Activated T-helper 1 cell treated with anti-CD3 and anti-CD28 coated beads, Interleukin-12 subunit alpha, Interleukin-12 subunit beta, Interleukin-2, Interleukin-4 antibody, amounts not matched to agents 30 ng/mL and 10 ng/mL and 1 ng/mL, durations not matched to agents 14 hours and 24 hours and 36 hours (primary cell): ENCODE measurements at regions of chr9 and their contacts with region 1.

Region 1: GRCh38 chr9:109119439-109120203 is at the start of gene TMEM245:
- DNase-seq: peak; percentile 91
- H3K4me3 Mint-ChIP-seq: peak within 1 kb of the TSS; percentile 95
- H3K27ac Mint-ChIP-seq: peak within 1 kb of the TSS; percentile 87
- H3K4me1 Mint-ChIP-seq: peaks cover 33% of the 10 kb centered on the region
- H3K27me3 Mint-ChIP-seq: no peaks in the 10 kb centered on the region
- total RNA-seq, gene TMEM245: 26.9 and 29.4 TPM in 2 replicates

Region 2: GRCh38 chr9:108933718-108934322 is 185.8 kb before region 1 on chr9 and contains the start of gene ELP1:
- intact Hi-C with region 1: loop called (anchors 1 kb)
- DNase-seq: peak; percentile 90
- H3K4me3 Mint-ChIP-seq: peak within 1 kb of the TSS; percentile 95
- H3K27ac Mint-ChIP-seq: peak within 1 kb of the TSS; percentile 95
- H3K4me1 Mint-ChIP-seq: peaks cover 23% of the 10 kb centered on the region
- H3K27me3 Mint-ChIP-seq: no peaks in the 10 kb centered on the region
- total RNA-seq, gene ELP1: 31.6 and 35.2 TPM in 2 replicates

Region 3: GRCh38 chr9:109092051-109092580 is 27.5 kb before region 1 on chr9:
- intact Hi-C with region 1: loop called (anchors 1 kb)
- DNase-seq: no peak
- H3K4me3 Mint-ChIP-seq: no peak overlapping the region
- H3K27ac Mint-ChIP-seq: peak overlapping the region; percentile 82
- H3K4me1 Mint-ChIP-seq: peaks cover 47% of the 10 kb centered on the region
- H3K27me3 Mint-ChIP-seq: no peaks in the 10 kb centered on the region

Region 4: GRCh38 chr9:109182940-109183798 is 63.5 kb after region 1 on chr9:
- intact Hi-C with region 1: loop called (anchors 1 kb)
- DNase-seq: no peak
- H3K4me3 Mint-ChIP-seq: no peak overlapping the region
- H3K27ac Mint-ChIP-seq: no peak overlapping the region
- H3K4me1 Mint-ChIP-seq: peaks cover 7% of the 10 kb centered on the region
- H3K27me3 Mint-ChIP-seq: peaks cover 42% of the 10 kb centered on the region

Region 5: DNA sequence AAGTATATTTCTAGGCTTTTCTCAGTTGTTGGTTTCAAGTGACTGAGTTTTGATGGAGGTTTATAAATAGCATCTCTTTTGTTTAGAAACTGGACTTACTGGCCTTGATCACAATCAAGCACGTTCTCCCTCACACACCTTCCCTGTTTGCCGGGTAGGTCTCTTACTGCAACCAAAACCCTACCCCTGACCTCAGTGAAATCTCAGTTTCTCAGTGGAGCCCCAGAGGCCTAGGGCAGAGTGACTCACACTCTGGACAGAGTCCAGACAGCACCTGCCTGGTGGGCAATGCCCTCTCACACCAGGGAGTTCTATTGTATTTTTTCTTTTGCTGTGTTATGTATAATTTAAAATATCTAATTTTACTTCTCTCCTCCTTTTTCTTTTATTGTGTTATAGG is 249.7 kb after region 1 on chr9:
- intact Hi-C with region 1: no loop called
- DNase-seq: no peak
- H3K4me3 Mint-ChIP-seq: no peak overlapping the region
- H3K27ac Mint-ChIP-seq: no peak overlapping the region
- H3K4me1 Mint-ChIP-seq: no peaks in the 10 kb centered on the region
- H3K27me3 Mint-ChIP-seq: no peaks in the 10 kb centered on the region